H1 (cell line): ENCODE measurements at regions of chr5 and their contacts with region 1.

Region 1: GRCh38 chr5:75053304-75054133 is 1.2 kb upstream of the GCNT4 start:
- DNase-seq: peak in 1 of 2 experiments; percentile 70
- H3K4me3 ChIP-seq: peak overlapping the region; percentile 68 to 76 (median 73)
- H3K27ac ChIP-seq: peak overlapping the region; percentile 35; the same call in 1 of the 2 replicates
- H3K4me1 ChIP-seq: peaks cover 18 to 35% (median 27%) of the 10 kb centered on the region in 4 experiments
- H3K27me3 ChIP-seq: peaks cover 0 to 33% (median 15%) of the 10 kb centered on the region in 4 experiments; a peak in 4 of 7 replicates
- CTCF ChIP-seq: peak in 1 of 3 experiments; percentile 0; a peak in 1 of 4 replicates
- EP300 ChIP-seq: no peak
- POLR2A ChIP-seq: peak in 1 of 2 experiments; percentile 11; a peak in 1 of 3 replicates
- RAD21 ChIP-seq: no peak

Region 2: DNA sequence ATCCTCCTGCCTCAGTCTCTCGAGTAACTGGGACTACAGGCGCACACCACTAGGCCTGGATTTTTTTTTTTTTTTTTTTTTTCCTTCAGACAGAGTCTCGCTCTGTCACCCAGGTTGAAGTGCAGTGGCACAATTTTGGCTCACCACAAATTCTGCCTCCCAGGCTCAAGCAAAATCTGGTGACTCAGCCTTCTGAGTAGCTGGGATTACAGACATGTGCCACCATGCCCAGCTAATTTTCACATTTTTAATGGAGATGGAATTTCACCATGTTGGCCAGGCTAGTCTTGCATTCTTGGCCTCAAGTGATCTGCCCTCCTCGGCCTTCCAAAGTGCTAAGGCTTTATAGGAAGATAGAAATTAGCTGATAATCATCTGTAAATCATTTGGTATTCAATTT is 242.6 kb before region 1 on chr5:
- CTCF ChIA-PET with region 1: no interaction called
- POLR2A ChIA-PET with region 1: no interaction called
- DNase-seq: no peak
- H3K4me3 ChIP-seq: no peak overlapping the region
- H3K27ac ChIP-seq: no peak overlapping the region
- H3K4me1 ChIP-seq: peaks cover 0 to 8% (median 3%) of the 10 kb centered on the region in 4 experiments; a peak in 4 of 7 replicates
- H3K27me3 ChIP-seq: no peaks in the 10 kb centered on the region
- CTCF ChIP-seq: no peak
- EP300 ChIP-seq: no peak
- POLR2A ChIP-seq: no peak
- RAD21 ChIP-seq: no peak

Region 3: GRCh38 chr5:75037135-75037534 is 16.4 kb before region 1 on chr5:
- CTCF ChIA-PET with region 1: interaction called, 29 read pairs
- POLR2A ChIA-PET with region 1: interaction called, 6 read pairs
- DNase-seq: no peak
- H3K4me3 ChIP-seq: no peak overlapping the region
- H3K27ac ChIP-seq: no peak overlapping the region
- H3K4me1 ChIP-seq: peaks cover 0 to 3% (median 0%) of the 10 kb centered on the region in 4 experiments; a peak in 2 of 7 replicates
- H3K27me3 ChIP-seq: no peaks in the 10 kb centered on the region
- CTCF ChIP-seq: no peak
- EP300 ChIP-seq: no peak
- POLR2A ChIP-seq: no peak
- RAD21 ChIP-seq: no peak

Region 4: GRCh38 chr5:75167345-75167744 is 113.8 kb after region 1 on chr5:
- CTCF ChIA-PET with region 1: interaction called, 12 read pairs
- POLR2A ChIA-PET with region 1: no interaction called
- DNase-seq: no peak
- H3K4me3 ChIP-seq: no peak overlapping the region
- H3K27ac ChIP-seq: no peak overlapping the region
- H3K4me1 ChIP-seq: no peaks in the 10 kb centered on the region
- H3K27me3 ChIP-seq: no peaks in the 10 kb centered on the region
- CTCF ChIP-seq: peak in 2 of 3 experiments; percentile 70 to 87; a peak in 3 of 4 replicates
- EP300 ChIP-seq: no peak
- POLR2A ChIP-seq: no peak
- RAD21 ChIP-seq: peak; percentile 39 to 52

Region 5: GRCh38 chr5:75236322-75237316 is 183.1 kb after region 1 on chr5 and contains the start of gene ANKRD31:
- CTCF ChIA-PET with region 1: interaction called, 41 read pairs
- POLR2A ChIA-PET with region 1: interaction called, 12 read pairs
- DNase-seq: peak in 1 of 2 experiments; percentile 86
- H3K4me3 ChIP-seq: peak within 1 kb of the TSS; percentile 65 to 82 (median 74)
- H3K27ac ChIP-seq: 0 out of 2 replicates have a peak within 1 kb of the TSS, but pooled peaks have one; percentile 57
- H3K4me1 ChIP-seq: peaks cover 5 to 12% (median 9%) of the 10 kb centered on the region in 4 experiments
- H3K27me3 ChIP-seq: no peaks in the 10 kb centered on the region
- CTCF ChIP-seq: peak; percentile 71 to 86 (median 84)
- EP300 ChIP-seq: 0 out of 3 replicates have a peak, but pooled peaks of 1 of the 2 experiments have one; percentile 18
- POLR2A ChIP-seq: peak in 1 of 2 experiments; percentile 53; a peak in 1 of 3 replicates
- RAD21 ChIP-seq: peak; percentile 59 to 84
- total RNA-seq, gene ANKRD31: 0.06 and 0.27 TPM in 2 replicates

Region 6: DNA sequence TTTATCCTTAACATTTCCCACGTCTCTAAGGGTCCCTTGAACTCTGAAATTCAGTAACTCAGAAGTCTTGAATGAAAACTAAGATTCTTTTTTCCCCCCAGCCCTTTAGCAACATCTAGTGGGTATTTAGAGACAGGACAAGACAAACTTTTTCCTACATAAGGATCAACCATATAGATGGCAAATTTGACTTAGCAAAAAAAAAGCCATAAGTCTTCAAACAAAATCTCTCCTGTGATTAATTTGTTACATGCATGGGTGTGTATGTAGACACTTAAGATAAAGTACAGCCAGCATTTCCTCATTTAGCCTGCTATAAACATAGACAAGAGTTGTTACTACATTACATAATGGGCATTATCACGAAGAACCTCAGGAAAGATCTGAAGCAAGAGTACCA is 212.2 kb after region 1 on chr5:
- CTCF ChIA-PET with region 1: interaction called, 15 read pairs
- POLR2A ChIA-PET with region 1: no interaction called
- DNase-seq: no peak
- H3K4me3 ChIP-seq: no peak overlapping the region
- H3K27ac ChIP-seq: no peak overlapping the region
- H3K4me1 ChIP-seq: no peaks in the 10 kb centered on the region
- H3K27me3 ChIP-seq: no peaks in the 10 kb centered on the region
- CTCF ChIP-seq: peak in 2 of 3 experiments; percentile 45 to 51; a peak in 2 of 4 replicates
- EP300 ChIP-seq: no peak
- POLR2A ChIP-seq: no peak
- RAD21 ChIP-seq: peak; percentile 84